Endothelial cell of umbilical vein (primary cell): ENCODE measurements at regions of chr10 and their contacts with region 1.

Region 1: GRCh38 chr10:97072851-97073665 is 112.7 kb downstream of the SLIT1 start:
- DNase-seq: peak; percentile 78
- H3K4me3 ChIP-seq: no peak overlapping the region
- H3K27ac ChIP-seq: no peak overlapping the region
- H3K4me1 ChIP-seq: no peaks in the 10 kb centered on the region
- H3K27me3 ChIP-seq: peaks cover 2 to 4% of the 10 kb centered on the region in 2 experiments
- CTCF ChIP-seq: peak; percentile 88 to 95
- POLR2A ChIP-seq: no peak

Region 2: DNA sequence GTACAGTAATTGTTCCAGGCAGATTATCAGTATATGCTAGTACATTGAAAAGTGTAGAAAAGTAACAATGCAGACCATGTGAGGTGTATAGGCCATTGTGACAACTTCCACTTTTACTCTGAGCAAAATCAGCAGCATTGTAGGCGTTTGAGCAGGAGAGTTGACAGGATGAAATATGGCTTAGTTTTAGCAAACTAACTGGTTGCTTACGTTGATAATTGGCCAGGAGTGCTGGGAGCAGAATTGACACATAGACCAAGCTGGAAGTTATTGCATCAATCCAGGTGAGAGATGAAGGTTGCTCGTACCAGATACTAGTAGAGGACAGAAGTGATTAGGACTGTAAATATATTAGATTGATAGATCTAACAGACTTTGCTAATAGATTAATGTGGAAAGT is 195.0 kb before region 1 on chr10:
- CTCF ChIA-PET with region 1: no interaction called
- POLR2A ChIA-PET with region 1: no interaction called
- dilution Hi-C with region 1: no loop called
- intact Hi-C with region 1: no loop called
- DNase-seq: no peak
- H3K4me3 ChIP-seq: no peak overlapping the region
- H3K27ac ChIP-seq: no peak overlapping the region
- H3K4me1 ChIP-seq: peaks cover 7% of the 10 kb centered on the region
- H3K27me3 ChIP-seq: no peaks in the 10 kb centered on the region
- CTCF ChIP-seq: no peak
- POLR2A ChIP-seq: no peak

Region 3: DNA sequence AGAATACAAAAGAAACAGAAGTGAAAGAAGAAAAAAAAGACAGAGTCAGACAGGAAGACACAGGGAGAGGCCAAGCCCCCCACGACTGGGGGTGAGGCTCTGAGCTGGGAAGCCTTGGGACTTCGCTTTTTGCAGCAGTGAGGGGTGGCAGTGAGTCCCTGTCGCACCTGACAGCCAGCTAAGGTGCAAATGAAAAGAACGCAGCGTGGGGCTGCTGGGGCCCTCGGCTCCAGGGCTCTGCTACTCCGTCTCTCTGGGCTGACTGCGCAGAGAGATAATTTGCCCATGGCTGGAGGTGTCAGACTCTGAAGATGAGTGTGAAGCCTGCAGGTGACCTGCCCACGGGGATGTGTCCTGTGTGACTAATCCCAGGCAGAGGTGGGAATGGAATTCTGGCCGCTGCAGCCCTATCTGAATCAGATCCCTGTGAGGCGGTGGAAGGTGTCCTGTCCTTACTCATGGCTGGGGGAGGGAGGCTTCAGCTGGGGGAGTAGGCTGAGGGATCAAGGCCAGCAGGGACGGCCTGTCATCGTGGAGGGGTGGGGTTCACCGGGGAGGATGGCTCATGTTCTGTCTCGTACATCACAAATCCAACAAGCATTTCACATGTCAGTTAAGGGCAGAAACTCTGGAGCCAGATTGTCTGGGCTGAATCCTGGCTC is 16.3 kb after region 1 on chr10:
- CTCF ChIA-PET with region 1: interaction called, 83 read pairs
- POLR2A ChIA-PET with region 1: no interaction called
- dilution Hi-C with region 1: no loop called
- intact Hi-C with region 1: no loop called
- DNase-seq: no peak
- H3K4me3 ChIP-seq: no peak overlapping the region
- H3K27ac ChIP-seq: no peak overlapping the region
- H3K4me1 ChIP-seq: no peaks in the 10 kb centered on the region
- H3K27me3 ChIP-seq: peaks cover 9 to 10% of the 10 kb centered on the region in 2 experiments
- CTCF ChIP-seq: no peak
- POLR2A ChIP-seq: no peak

Region 4: DNA sequence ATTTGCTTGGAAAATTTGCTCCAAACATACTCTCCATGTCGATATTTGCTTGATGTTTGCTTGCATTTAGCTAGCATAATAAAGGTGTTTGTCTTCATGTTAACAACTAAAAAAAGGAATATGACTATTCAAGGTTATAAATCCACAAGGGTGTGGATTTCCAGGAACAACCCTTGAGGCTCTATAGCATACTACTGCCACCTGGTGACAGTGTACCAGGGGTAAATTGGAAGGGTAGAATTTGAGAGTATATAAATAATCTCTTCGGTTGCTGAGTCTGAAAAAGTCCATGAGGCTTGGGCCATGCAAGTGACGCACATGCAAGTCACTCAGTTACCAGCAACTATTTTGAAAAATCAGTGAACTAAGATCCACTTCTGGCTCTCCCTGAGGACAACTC is 44.3 kb after region 1 on chr10:
- CTCF ChIA-PET with region 1: interaction called, 48 read pairs
- POLR2A ChIA-PET with region 1: no interaction called
- dilution Hi-C with region 1: no loop called
- intact Hi-C with region 1: loop called (anchors 1 kb)
- DNase-seq: peak; percentile 17
- H3K4me3 ChIP-seq: no peak overlapping the region
- H3K27ac ChIP-seq: no peak overlapping the region
- H3K4me1 ChIP-seq: no peaks in the 10 kb centered on the region
- H3K27me3 ChIP-seq: peaks cover 2 to 5% of the 10 kb centered on the region in 2 experiments
- CTCF ChIP-seq: peak in 1 of 2 donors; percentile 38
- POLR2A ChIP-seq: no peak

Region 5: GRCh38 chr10:97210543-97210961 is 137.5 kb after region 1 on chr10:
- CTCF ChIA-PET with region 1: interaction called, 397 read pairs
- POLR2A ChIA-PET with region 1: no interaction called
- dilution Hi-C with region 1: no loop called
- intact Hi-C with region 1: loop called (anchors 1 kb)
- DNase-seq: peak; percentile 85
- H3K4me3 ChIP-seq: no peak overlapping the region
- H3K27ac ChIP-seq: no peak overlapping the region
- H3K4me1 ChIP-seq: no peaks in the 10 kb centered on the region
- H3K27me3 ChIP-seq: no peaks in the 10 kb centered on the region
- CTCF ChIP-seq: peak; percentile 88 to 91
- POLR2A ChIP-seq: no peak

Region 6: DNA sequence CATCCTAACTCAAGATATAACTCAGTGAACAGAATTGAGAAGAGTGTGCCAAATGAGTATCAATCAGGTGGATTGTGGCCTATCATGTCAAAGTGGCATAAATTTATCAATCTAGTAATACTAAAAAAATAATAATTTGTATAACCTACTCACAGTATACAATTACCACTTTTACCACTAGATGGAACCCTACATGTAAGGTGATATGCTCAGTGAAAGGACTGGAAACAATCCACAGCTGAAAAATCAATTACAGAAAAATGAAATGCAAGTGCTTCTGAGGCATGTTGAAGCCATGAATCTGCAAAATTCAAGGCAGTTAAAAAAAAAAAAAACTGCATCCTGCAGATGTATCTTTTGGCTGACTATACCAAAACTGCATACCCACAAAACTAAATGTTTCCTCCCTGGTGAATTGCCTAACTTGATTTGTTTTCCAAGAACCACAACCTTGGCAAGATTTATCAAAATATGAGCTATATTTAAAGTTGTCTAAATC is 205.5 kb after region 1 on chr10:
- CTCF ChIA-PET with region 1: interaction called, 17 read pairs
- POLR2A ChIA-PET with region 1: no interaction called
- dilution Hi-C with region 1: no loop called
- intact Hi-C with region 1: no loop called
- DNase-seq: peak; percentile 86
- H3K4me3 ChIP-seq: no peak overlapping the region
- H3K27ac ChIP-seq: no peak overlapping the region
- H3K4me1 ChIP-seq: peaks cover 4% of the 10 kb centered on the region
- H3K27me3 ChIP-seq: no peaks in the 10 kb centered on the region
- CTCF ChIP-seq: peak; percentile 30 to 41
- POLR2A ChIP-seq: no peak

Region 7: DNA sequence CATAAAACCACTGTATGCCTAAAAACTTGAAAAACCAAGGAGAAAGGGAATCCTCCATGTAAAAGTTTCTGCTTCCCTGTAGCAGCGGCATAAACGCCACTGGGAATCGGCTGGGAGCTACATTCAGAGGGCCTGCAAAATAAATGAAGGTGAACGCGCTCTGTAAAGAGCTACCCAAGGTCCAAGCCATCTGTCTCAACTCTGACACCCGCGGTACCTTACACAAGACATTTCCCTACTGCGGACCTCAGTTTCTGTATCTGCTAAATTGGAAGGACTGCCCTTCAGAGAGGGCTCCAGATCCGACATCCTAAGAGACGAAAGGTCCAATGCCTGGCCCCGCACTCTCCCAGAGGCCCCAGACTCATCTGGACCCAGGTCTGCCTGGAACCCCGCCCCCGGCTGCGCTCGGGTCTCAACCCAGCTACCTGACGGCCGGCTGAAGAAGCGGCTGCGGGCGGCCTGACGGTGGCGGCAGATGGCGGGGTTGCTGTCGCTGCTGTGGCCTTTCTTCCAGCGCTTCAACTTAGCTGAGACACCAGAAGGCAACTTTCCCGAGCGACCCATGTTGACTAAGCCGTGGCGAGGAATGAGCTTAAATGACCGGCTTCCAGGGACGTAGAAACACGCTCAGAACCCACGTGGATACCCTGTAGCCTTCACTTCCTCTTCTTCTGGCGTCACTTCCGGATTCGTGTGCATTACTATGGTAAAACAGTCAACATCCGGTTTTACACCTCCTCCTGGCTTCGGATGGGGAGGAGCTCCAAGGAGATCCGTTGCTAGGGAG is 327.8 kb after region 1 on chr10 and contains the start of gene RRP12:
- CTCF ChIA-PET with region 1: interaction called, 11 read pairs
- POLR2A ChIA-PET with region 1: no interaction called
- dilution Hi-C with region 1: no loop called
- intact Hi-C with region 1: no loop called
- DNase-seq: peak; percentile 97
- H3K4me3 ChIP-seq: peak within 1 kb of the TSS; percentile 54 to 84 (median 58)
- H3K27ac ChIP-seq: peak within 1 kb of the TSS; percentile 75
- H3K4me1 ChIP-seq: peaks cover 10% of the 10 kb centered on the region
- H3K27me3 ChIP-seq: no peaks in the 10 kb centered on the region
- CTCF ChIP-seq: peak in 1 of 2 donors; percentile 5
- POLR2A ChIP-seq: no peak
- total RNA-seq, gene RRP12: 35.8 and 40.9 TPM in 2 replicates